Activated CD4-positive, alpha-beta T cell treated with anti-CD3 and anti-CD28 coated beads, Interleukin-2, amount 10 ng/mL, durations not matched to agents 7 days and 5 days (primary cell): ENCODE measurements at regions of chr16 and their contacts with region 1.

Region 1: GRCh38 chr16:31711344-31711845 is 162.2 kb upstream of the ZNF267 start:
- DNase-seq: no peak
- H3K4me3 Mint-ChIP-seq: no peak overlapping the region
- H3K27ac Mint-ChIP-seq: peak overlapping the region; percentile 55
- H3K4me1 Mint-ChIP-seq: peaks cover 73% of the 10 kb centered on the region
- H3K27me3 Mint-ChIP-seq: no peaks in the 10 kb centered on the region

Region 2: DNA sequence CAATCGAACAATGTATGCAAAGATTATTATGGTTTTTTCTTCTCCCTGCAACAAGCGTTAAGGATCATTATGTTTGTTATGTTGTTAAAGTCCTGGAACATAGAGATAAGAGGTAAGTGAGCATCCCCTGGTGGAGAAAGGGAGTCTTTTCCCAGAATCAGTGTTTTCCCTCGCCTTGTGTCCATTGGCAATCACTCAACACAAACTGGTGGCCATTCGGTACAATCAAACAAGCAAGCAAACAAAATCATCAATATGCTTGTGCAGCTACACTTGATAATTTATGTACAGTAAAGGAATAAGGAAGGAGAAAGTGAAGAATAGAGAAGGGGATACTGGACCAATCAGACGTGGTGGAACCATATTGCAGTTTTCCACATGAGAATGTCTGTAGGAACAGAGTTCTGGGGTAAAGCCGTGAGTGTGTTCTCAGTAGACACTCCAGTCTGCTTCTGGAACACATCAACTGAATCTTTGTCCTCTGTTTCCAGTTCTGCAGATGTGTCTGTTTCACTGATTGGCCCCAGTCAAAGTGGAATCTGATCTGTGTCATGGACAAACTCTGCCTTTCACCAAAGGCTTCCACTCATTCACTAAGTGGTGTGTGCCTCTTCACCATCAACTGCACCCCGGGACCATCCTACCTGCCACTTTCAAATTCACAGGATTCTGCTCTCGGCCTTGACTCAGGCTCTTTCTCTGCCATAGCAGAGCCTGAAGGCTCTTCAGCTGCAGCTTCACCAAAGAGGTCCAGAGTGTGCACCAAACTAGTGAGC is 14.2 kb before region 1 on chr16:
- CTCF ChIA-PET with region 1: interaction called, 13 read pairs
- POLR2A ChIA-PET with region 1: no interaction called
- DNase-seq: no peak
- H3K4me3 Mint-ChIP-seq: no peak overlapping the region
- H3K27ac Mint-ChIP-seq: peak overlapping the region; percentile 64
- H3K4me1 Mint-ChIP-seq: peaks cover 29% of the 10 kb centered on the region
- H3K27me3 Mint-ChIP-seq: no peaks in the 10 kb centered on the region